ENCODE measurements at regions of chr3 and their contacts with region 1.

Region 1: DNA sequence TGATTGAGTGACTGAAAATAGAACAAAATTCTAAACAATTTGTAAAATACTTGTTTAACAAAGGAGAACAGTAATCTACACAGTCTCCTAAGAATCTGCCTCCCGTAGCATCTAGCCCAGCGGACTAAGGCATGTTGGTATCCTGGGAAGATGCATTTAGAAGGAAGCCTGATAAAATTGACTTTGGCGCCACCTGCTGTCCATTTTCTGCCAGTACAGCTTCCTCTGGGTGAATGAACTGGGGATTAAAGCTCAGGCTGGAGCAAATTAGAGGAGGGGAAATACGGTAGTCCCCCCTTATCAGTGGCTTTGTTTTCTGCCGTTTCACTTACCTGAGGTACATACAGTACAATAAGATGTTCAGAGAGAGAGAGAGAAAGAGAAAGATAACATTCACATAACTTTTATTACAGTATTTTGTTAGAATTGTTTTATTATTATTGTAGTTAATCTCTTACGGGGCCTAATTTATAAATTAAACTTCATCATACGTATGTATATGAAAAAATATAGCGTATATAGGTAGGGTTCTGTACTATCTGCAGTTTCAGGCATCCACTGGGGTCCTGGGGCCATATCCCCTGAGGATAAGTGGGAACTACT is 191.6 kb downstream of the GAP43 start:
- DNase-seq: peak; percentile 71
- ATAC-seq: peak; percentile 65
- H3K4me3 ChIP-seq: no peak overlapping the region
- H3K4me3 Mint-ChIP-seq: no peak overlapping the region
- H3K27ac ChIP-seq: no peak overlapping the region
- H3K27ac Mint-ChIP-seq: no peak overlapping the region
- H3K4me1 ChIP-seq: no peaks in the 10 kb centered on the region
- H3K4me1 Mint-ChIP-seq: no peaks in the 10 kb centered on the region
- H3K27me3 ChIP-seq: no peaks in the 10 kb centered on the region
- H3K27me3 Mint-ChIP-seq: no peaks in the 10 kb centered on the region
- CTCF ChIP-seq: peak; percentile 99

Region 2: DNA sequence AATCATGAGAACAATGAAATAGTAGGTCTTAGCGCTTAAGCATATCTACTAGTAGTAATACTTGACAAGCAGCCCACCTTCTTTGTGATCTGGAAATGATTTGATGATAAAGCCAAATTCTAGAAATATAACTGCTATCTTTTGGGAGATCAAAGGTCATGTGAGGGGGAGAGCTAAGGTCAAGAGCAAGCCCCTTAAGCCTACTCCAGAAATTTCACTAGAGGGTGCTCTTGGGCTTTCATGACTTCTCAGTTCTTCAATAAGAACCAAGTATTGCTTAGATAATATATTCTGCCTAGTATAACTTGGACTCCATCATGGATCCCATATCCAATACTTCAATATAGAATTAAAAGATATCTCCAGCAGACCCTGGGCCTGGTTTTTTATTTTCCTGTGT is 987.4 kb before region 1 on chr3:
- CTCF ChIA-PET with region 1: interaction called, 4 read pairs
- POLR2A ChIA-PET with region 1: no interaction called
- intact Hi-C with region 1: loop called (anchors 2 kb)
- DNase-seq: peak; percentile 49
- ATAC-seq: peak; percentile 31
- H3K4me3 ChIP-seq: no peak overlapping the region
- H3K4me3 Mint-ChIP-seq: no peak overlapping the region
- H3K27ac ChIP-seq: no peak overlapping the region
- H3K27ac Mint-ChIP-seq: no peak overlapping the region
- H3K4me1 ChIP-seq: no peaks in the 10 kb centered on the region
- H3K4me1 Mint-ChIP-seq: no peaks in the 10 kb centered on the region
- H3K27me3 ChIP-seq: no peaks in the 10 kb centered on the region
- H3K27me3 Mint-ChIP-seq: no peaks in the 10 kb centered on the region
- CTCF ChIP-seq: peak; percentile 62

Region 3: GRCh38 chr3:115092220-115092791 is 722.6 kb before region 1 on chr3:
- CTCF ChIA-PET with region 1: interaction called, 8 read pairs
- POLR2A ChIA-PET with region 1: no interaction called
- intact Hi-C with region 1: loop called (anchors 5 kb)
- DNase-seq: peak; percentile 69
- ATAC-seq: peak; percentile 33
- H3K4me3 ChIP-seq: no peak overlapping the region
- H3K4me3 Mint-ChIP-seq: no peak overlapping the region
- H3K27ac ChIP-seq: no peak overlapping the region
- H3K27ac Mint-ChIP-seq: no peak overlapping the region
- H3K4me1 ChIP-seq: no peaks in the 10 kb centered on the region
- H3K4me1 Mint-ChIP-seq: peaks cover 6% of the 10 kb centered on the region
- H3K27me3 ChIP-seq: no peaks in the 10 kb centered on the region
- H3K27me3 Mint-ChIP-seq: no peaks in the 10 kb centered on the region
- CTCF ChIP-seq: peak; percentile 82

Region 4: DNA sequence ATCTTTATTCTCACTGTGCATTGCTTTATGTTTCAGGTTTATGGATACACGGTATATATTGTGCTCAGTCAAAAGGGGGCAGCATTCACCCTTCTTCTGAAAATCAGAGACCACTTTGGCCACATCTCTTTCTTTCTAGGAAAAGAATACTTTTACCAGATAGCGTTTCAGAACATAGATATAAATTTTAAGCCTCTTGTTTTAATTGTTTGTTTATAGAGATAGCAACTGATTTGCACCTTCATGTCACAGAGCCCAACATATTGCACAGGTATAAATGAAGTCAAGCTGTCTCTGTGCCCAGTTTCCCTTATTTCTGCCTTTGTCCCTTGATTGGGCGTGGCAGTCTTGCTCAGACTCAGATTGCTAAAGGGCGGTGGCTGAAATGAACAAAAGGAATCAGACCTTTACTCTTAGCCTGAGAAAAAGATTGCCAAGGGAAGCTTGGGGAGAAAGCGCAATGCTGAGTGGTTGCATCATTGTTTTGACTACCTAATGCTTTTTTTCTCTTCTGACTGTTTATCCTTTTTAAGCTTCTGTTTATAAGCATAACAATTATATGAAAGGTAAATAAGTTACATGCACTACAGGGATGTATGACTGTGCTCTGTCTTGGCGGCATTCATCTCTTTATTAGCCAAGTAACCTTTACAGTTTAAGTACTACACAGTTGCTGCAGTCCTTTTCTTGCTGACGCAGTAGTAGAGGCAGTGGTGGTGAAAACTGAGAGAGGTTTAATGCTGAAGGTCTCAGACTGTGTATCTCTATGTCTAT is 597.0 kb before region 1 on chr3:
- CTCF ChIA-PET with region 1: interaction called, 17 read pairs
- POLR2A ChIA-PET with region 1: no interaction called
- intact Hi-C with region 1: loop called (anchors 1 kb)
- DNase-seq: peak; percentile 45
- ATAC-seq: no peak
- H3K4me3 ChIP-seq: no peak overlapping the region
- H3K4me3 Mint-ChIP-seq: no peak overlapping the region
- H3K27ac ChIP-seq: no peak overlapping the region
- H3K27ac Mint-ChIP-seq: no peak overlapping the region
- H3K4me1 ChIP-seq: peaks cover 5 to 6% of the 10 kb centered on the region in 2 donors
- H3K4me1 Mint-ChIP-seq: peaks cover 3% of the 10 kb centered on the region
- H3K27me3 ChIP-seq: peaks cover 0 to 7% (median 2%) of the 10 kb centered on the region in 4 experiments
- H3K27me3 Mint-ChIP-seq: peaks cover 23% of the 10 kb centered on the region
- CTCF ChIP-seq: peak; percentile 60

Region 5: GRCh38 chr3:115588201-115589115 is 226.4 kb before region 1 on chr3:
- CTCF ChIA-PET with region 1: no interaction called
- POLR2A ChIA-PET with region 1: no interaction called
- intact Hi-C with region 1: no loop called
- DNase-seq: no peak
- ATAC-seq: no peak
- H3K4me3 ChIP-seq: no peak overlapping the region
- H3K4me3 Mint-ChIP-seq: no peak overlapping the region
- H3K27ac ChIP-seq: no peak overlapping the region
- H3K27ac Mint-ChIP-seq: no peak overlapping the region
- H3K4me1 ChIP-seq: no peaks in the 10 kb centered on the region
- H3K4me1 Mint-ChIP-seq: no peaks in the 10 kb centered on the region
- H3K27me3 ChIP-seq: no peaks in the 10 kb centered on the region
- H3K27me3 Mint-ChIP-seq: peaks cover 14% of the 10 kb centered on the region
- CTCF ChIP-seq: no peak

Region 6: GRCh38 chr3:115692887-115693524 is 121.9 kb before region 1 on chr3:
- CTCF ChIA-PET with region 1: interaction called, 4 read pairs
- POLR2A ChIA-PET with region 1: no interaction called
- intact Hi-C with region 1: loop called (anchors 2 kb)
- DNase-seq: peak; percentile 79
- ATAC-seq: peak; percentile 94
- H3K4me3 ChIP-seq: no peak overlapping the region
- H3K4me3 Mint-ChIP-seq: no peak overlapping the region
- H3K27ac ChIP-seq: no peak overlapping the region
- H3K27ac Mint-ChIP-seq: no peak overlapping the region
- H3K4me1 ChIP-seq: no peaks in the 10 kb centered on the region
- H3K4me1 Mint-ChIP-seq: no peaks in the 10 kb centered on the region
- H3K27me3 ChIP-seq: no peaks in the 10 kb centered on the region
- H3K27me3 Mint-ChIP-seq: peaks cover 4% of the 10 kb centered on the region
- CTCF ChIP-seq: peak; percentile 85

Region 7: GRCh38 chr3:115804722-115805121 is 10.2 kb before region 1 on chr3:
- CTCF ChIA-PET with region 1: interaction called, 16 read pairs
- POLR2A ChIA-PET with region 1: no interaction called
- intact Hi-C with region 1: no loop called
- DNase-seq: no peak
- ATAC-seq: no peak
- H3K4me3 ChIP-seq: no peak overlapping the region
- H3K4me3 Mint-ChIP-seq: no peak overlapping the region
- H3K27ac ChIP-seq: no peak overlapping the region
- H3K27ac Mint-ChIP-seq: no peak overlapping the region
- H3K4me1 ChIP-seq: no peaks in the 10 kb centered on the region
- H3K4me1 Mint-ChIP-seq: no peaks in the 10 kb centered on the region
- H3K27me3 ChIP-seq: peaks cover 0 to 13% (median 4%) of the 10 kb centered on the region in 4 experiments
- H3K27me3 Mint-ChIP-seq: peaks cover 54% of the 10 kb centered on the region
- CTCF ChIP-seq: no peak

Region 8: GRCh38 chr3:115825046-115825445 is 10.2 kb after region 1 on chr3:
- CTCF ChIA-PET with region 1: interaction called, 29 read pairs
- POLR2A ChIA-PET with region 1: no interaction called
- intact Hi-C with region 1: no loop called
- DNase-seq: no peak
- ATAC-seq: no peak
- H3K4me3 ChIP-seq: no peak overlapping the region
- H3K4me3 Mint-ChIP-seq: no peak overlapping the region
- H3K27ac ChIP-seq: no peak overlapping the region
- H3K27ac Mint-ChIP-seq: no peak overlapping the region
- H3K4me1 ChIP-seq: no peaks in the 10 kb centered on the region
- H3K4me1 Mint-ChIP-seq: no peaks in the 10 kb centered on the region
- H3K27me3 ChIP-seq: peaks cover 0 to 4% (median 2%) of the 10 kb centered on the region in 4 experiments
- H3K27me3 Mint-ChIP-seq: peaks cover 23% of the 10 kb centered on the region
- CTCF ChIP-seq: no peak

Measured in B cell (primary cell).